ENCODE measurements at regions of chr12 and their contacts with region 1.

Region 1: DNA sequence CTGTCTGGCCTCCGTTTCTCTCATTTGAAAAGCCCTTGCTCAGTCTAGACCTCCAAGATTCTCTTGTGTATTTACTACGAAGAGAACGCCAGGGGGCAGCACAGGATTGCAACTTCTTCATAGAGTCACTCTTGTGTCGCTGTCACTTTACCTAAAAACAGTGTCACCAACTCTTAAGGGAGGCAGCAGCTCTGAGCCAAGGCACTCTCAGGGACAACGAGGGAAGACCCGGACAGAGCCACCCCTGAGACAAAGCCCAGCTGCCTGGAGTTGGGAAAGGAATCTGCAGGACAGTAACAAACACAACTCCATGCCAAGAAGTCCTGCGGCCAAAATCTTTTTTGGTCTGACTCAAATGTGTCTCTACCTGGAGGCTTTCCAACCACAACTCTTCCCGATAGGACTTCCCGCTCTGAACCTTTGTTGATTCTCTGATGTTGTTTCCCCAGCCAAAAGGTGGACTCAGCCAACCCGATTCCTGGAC is 9.6 kb upstream of the RPAP3 start:
- DNase-seq: no peak
- H3K4me3 ChIP-seq: 0 out of 2 replicates have a peak overlapping the region, but pooled peaks have one; percentile 25
- H3K27ac ChIP-seq: no peak overlapping the region
- H3K27me3 ChIP-seq: no peaks in the 10 kb centered on the region
- CTCF ChIP-seq: peak; percentile 80

Region 2: DNA sequence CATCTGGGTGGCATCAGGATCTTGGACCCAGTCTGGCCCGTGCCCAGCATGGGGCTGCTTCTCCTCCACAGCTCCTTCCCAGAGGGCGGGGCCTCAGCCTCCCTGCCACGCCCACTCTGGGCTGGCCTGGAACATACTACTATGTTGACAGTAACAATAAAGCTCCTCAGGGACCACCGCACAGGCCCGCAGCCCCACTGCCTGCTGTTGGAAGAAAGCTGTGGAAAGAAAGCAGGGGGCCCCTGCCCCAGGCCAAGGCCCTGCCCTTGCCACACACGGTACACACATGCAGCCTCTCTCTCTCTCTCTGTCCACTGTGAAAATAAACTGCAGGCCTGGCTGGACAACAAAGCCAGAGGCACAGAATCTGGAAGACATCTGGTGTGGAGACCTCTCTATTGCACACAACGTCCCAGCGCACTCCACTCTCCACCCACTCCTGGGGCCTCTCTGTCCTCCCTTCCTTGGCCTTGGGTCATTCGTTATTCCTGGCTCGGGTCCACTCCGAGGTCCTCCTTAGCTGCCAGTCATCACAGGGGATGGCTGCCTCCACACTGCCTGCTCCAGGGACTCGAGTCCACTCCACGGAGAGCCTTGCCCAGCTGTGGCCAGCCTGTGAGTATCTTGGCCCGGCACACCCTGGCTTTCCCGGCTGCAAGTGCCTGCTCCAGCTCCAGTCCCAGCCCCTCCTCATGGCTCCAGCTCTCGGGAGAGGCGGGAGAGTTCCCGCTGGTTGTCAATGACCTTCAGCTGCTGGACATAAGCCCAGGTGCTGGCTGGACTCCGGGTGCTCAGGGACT is 21.6 kb after region 1 on chr12:
- CTCF ChIA-PET with region 1: interaction called, 78 read pairs
- POLR2A ChIA-PET with region 1: no interaction called
- DNase-seq: peak; percentile 24
- H3K4me3 ChIP-seq: no peak overlapping the region
- H3K27ac ChIP-seq: peak overlapping the region; percentile 65
- H3K27me3 ChIP-seq: no peaks in the 10 kb centered on the region
- CTCF ChIP-seq: no peak

Region 3: DNA sequence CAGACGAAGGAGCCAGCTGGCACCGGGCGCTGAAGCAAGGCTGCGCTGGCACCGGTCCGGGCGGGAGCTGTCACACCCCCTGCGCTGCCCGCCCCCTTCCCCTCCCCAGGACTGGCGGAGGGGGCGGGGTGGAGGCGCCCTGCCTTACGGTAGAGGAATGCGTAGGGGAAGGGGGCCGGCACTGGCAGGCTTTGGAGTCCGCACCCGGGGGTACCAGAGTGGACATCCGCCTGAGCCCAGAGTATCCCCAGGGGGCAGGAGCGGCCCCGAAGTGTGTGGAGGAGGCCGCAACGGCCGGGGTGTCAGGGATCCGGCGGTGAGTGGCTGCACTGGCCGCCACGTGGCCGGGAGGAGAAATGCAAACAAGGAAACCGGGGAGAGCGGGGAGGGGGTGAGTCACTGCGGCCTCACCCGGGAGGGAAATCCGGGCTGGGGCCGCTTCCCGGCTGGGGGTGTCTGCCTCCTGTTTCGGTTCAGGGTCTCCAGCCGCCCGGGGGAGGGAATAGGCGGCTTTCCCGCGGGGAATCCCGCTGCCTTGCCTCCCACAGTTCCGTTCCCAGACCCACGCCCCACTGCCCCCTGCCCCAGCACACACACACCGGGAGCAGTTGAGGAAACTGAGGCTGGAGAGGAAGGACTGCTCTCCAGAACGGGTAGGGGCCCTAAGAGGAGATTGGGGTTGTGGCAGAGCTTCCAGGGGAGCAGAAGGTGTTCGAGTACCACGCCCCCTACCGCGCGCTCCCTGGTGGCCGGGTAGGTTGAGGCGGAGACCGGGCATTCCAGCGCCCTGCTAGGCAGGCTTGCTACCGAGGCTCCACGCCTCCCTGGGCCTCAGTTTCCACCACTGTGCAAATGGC is 43.6 kb after region 1 on chr12 and contains the start of gene RAPGEF3:
- CTCF ChIA-PET with region 1: interaction called, 44 read pairs
- POLR2A ChIA-PET with region 1: no interaction called
- DNase-seq: no peak
- H3K4me3 ChIP-seq: peak within 1 kb of the TSS; percentile 69
- H3K27ac ChIP-seq: peak within 1 kb of the TSS; percentile 65
- H3K27me3 ChIP-seq: no peaks in the 10 kb centered on the region
- CTCF ChIP-seq: peak; percentile 48
- polyA plus RNA-seq, gene RAPGEF3: 1.7 and 2.1 TPM in 2 replicates

Region 4: DNA sequence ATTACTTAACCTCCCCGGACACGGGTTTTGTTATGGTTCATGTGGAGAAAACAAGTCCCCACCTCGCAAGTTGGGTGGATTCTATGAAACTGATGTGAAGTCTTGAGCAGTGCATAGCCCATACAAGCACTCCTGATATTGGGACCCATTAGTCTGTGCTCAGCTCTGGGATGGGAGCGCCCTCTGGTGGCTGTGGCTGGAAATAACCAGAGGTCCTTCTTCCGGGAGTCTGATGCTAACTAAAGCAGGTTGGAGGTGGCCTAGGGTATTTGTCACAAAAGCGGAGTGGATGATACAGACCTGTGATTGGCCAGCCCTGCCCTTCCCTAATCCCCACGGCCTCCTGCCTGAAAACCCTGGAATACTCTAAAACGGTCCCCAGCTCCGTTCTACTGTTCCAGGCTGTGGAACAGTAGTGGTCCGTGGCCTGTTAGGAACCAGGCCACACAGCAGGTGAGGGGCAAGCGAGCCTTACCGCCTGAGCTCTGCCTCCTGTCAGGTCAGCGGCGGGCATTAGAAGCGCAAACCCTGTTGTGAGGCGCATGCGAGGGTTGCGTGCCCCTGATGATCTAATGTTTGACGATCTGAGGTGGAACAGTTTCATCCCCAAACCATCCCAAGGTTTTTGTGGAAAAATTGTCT is 64.0 kb after region 1 on chr12:
- CTCF ChIA-PET with region 1: interaction called, 152 read pairs
- POLR2A ChIA-PET with region 1: no interaction called
- DNase-seq: peak; percentile 64
- H3K4me3 ChIP-seq: no peak overlapping the region
- H3K27ac ChIP-seq: no peak overlapping the region
- H3K27me3 ChIP-seq: no peaks in the 10 kb centered on the region
- CTCF ChIP-seq: peak; percentile 95

Region 5: DNA sequence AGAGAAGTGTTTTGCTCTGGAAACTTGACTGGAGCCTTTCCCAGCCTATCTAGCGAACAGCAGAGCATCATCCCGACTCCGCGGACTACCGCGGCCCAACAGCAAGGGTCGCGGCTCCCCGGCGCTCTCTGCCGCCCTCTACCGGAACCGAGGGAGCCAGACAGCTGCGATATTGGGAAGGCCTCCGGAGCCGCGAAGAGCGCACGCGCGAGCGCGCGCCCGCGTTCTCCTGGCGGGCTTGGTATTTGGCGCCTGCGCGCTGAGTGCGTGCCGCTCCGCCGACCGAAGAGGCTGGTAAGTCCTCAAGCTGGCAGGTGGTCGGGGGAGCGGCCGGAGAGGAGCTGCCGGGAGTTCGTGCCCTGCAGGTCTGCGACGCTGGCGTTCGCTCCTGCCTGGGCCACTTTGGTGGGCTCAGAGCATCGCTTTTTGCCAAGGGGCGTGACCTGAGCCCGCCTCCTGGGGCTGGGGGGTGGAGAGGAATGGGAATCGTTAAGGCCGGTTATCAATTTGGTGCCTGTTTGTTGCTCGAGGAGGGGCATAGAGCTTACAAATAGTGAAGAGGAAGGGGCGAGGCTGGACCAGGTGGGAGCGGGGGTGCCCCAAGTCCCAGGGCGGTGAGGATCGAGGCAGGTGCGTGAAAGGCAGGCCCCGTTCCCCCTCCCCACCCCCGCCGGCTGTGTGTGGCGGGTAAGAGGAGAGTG is 248.1 kb after region 1 on chr12 and contains the start of gene TMEM106C:
- CTCF ChIA-PET with region 1: interaction called, 12 read pairs
- POLR2A ChIA-PET with region 1: no interaction called
- DNase-seq: peak; percentile 74
- H3K4me3 ChIP-seq: peak within 1 kb of the TSS; percentile 87
- H3K27ac ChIP-seq: no peak within 1 kb of the TSS
- H3K27me3 ChIP-seq: peaks cover 3% of the 10 kb centered on the region
- CTCF ChIP-seq: peak; percentile 99
- polyA plus RNA-seq, gene TMEM106C: 93.7 and 96.3 TPM in 2 replicates

Region 6: DNA sequence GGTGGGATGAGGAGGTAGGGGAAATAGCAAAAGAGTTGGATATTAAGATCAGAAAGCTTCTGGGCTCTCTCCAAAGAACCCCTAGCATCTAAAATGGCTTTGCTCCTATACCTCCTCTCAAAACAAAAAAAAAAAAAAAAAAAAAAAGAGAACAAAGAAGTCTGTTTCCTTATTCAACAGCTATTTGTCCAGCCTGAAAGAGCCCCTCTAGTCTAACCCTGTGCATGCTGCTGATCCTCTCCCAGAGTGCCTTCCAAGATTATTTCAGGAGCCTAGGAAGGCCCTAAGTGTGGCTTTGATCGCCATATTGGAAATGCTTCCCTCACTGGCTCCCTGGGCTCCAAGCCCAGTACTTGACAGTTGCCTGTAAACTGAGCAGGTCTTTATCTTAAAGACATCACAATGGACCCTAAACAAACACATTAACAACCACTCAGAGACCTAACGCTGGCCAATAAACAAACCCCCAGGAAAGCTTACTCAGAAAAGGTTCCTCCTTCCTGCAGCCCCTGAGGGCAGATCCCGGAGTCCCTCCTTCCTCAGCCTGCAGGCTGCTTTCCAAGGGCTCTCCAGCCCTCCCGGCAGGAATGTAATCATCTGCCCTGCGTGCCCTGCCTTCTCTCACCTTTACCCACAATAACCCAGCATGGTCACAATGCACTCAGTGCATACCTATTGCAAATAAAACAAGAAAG is 306.2 kb after region 1 on chr12:
- CTCF ChIA-PET with region 1: no interaction called
- POLR2A ChIA-PET with region 1: no interaction called
- DNase-seq: no peak
- H3K4me3 ChIP-seq: no peak overlapping the region
- H3K27ac ChIP-seq: no peak overlapping the region
- H3K27me3 ChIP-seq: peaks cover 49% of the 10 kb centered on the region
- CTCF ChIP-seq: no peak

Measured in AG04450 (cell line).